Common myeloid progenitor, CD34-positive (primary cell): ENCODE measurements at regions of chr3 and their contacts with region 1.

Region 1: DNA sequence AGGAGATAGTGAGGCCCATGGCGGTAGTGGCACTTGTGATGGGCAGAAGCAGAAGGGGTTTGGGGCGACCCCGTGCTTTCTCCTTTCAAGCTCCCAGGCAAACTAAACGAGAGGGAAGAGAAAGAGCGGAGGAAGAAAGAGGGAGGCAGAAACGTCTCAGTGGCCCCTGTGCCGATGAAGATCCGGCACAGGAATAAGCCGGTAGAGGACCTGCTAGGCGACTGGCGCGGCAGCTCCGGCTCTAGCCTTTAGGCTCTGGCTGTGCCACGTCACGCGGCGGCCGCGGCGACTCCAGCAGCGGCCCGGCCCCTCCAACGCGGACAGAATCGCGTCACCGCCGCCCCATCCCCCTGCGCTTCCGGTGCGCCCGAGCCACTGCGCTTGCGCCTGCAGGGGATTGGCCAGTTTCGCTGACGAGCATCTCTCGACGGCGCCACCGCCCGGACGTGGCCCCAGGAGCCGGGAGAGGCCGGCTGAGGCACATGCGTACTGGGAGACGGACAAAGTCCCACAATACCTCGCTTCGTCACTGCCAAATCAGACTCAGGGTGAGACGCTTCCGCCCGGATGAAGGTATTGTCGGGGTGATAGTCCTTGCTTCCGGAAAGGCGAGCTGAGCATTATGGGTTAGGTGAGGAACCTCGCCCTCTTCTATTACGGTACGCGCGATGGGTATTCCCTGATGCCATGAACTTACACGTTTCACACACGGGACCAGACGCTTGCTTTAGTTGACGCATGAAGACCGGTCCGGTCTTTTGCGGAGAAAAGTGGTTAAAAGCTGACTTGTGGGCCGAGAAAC is at the start of gene ARF4:
- DNase-seq: peak; percentile 99 to 100 (median 99)
- H3K4me3 ChIP-seq: peak within 1 kb of the TSS; percentile 84 to 100 (median 96)
- H3K27ac ChIP-seq: peak within 1 kb of the TSS; percentile 94 to 98
- H3K4me1 ChIP-seq: peaks cover 20 to 35% (median 27%) of the 10 kb centered on the region in 4 experiments
- H3K27me3 ChIP-seq: no peaks in the 10 kb centered on the region

Region 2: GRCh38 chr3:57436195-57436761 is 161.0 kb before region 1 on chr3:
- CTCF ChIA-PET with region 1: no interaction called
- POLR2A ChIA-PET with region 1: no interaction called
- DNase-seq: no peak
- H3K4me3 ChIP-seq: no peak overlapping the region
- H3K27ac ChIP-seq: no peak overlapping the region
- H3K4me1 ChIP-seq: no peaks in the 10 kb centered on the region
- H3K27me3 ChIP-seq: no peaks in the 10 kb centered on the region

Region 3: DNA sequence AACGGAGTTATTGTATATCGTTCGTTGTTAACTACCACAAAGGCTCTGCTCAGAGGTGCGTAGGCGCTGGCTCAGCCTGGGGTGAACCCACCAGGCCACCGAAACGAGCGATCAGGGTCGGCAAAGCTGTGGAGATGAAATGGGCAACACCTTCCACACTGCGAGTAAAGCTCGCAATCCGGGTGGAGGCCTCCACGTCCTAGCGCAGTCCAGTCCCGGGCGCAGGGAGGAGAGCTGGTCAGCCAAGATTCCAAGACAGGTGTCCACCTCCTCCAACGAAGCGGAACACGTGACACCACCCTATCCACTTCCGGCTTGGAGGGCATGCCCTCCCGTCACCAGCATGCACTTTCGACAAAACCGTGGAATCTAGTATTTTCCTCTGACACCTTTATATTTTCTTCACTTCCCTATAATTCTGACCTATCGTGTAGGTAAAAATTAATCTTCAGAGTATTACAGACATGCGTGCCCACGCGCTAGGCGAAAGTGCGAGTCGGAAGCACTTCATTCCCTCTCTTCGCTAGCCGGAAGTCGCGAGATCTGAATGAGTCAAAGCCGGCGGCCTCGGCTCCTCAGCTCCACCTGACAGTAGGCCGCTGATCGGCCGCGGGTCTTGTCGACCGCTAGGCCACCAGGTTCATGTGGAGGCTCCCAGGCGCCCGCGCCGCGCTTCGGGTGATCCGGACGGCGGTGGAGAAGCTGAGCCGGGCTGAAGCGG is 41.4 kb before region 1 on chr3 and contains the start of gene PDE12:
- CTCF ChIA-PET with region 1: no interaction called
- POLR2A ChIA-PET with region 1: interaction called, 13 read pairs
- DNase-seq: peak; percentile 90 to 94 (median 92)
- H3K4me3 ChIP-seq: peak within 1 kb of the TSS; percentile 58 to 94 (median 81)
- H3K27ac ChIP-seq: peak within 1 kb of the TSS; percentile 96 to 98
- H3K4me1 ChIP-seq: peaks cover 8 to 31% (median 26%) of the 10 kb centered on the region in 4 experiments
- H3K27me3 ChIP-seq: no peaks in the 10 kb centered on the region

Region 4: GRCh38 chr3:57572096-57572495 is 25.2 kb before region 1 on chr3:
- CTCF ChIA-PET with region 1: interaction called, 11 read pairs
- POLR2A ChIA-PET with region 1: interaction called, 3 read pairs
- DNase-seq: no peak
- H3K4me3 ChIP-seq: no peak overlapping the region
- H3K27ac ChIP-seq: no peak overlapping the region
- H3K4me1 ChIP-seq: peaks cover 0 to 4% (median 0%) of the 10 kb centered on the region in 4 experiments
- H3K27me3 ChIP-seq: no peaks in the 10 kb centered on the region

Region 5: GRCh38 chr3:57582474-57583168 is 14.7 kb before region 1 on chr3:
- CTCF ChIA-PET with region 1: interaction called, 6 read pairs
- POLR2A ChIA-PET with region 1: interaction called, 10 read pairs
- DNase-seq: peak; percentile 43 to 66 (median 62)
- H3K4me3 ChIP-seq: no peak overlapping the region
- H3K27ac ChIP-seq: no peak overlapping the region
- H3K4me1 ChIP-seq: peaks cover 0 to 4% (median 0%) of the 10 kb centered on the region in 4 experiments
- H3K27me3 ChIP-seq: no peaks in the 10 kb centered on the region